ENCODE measurements at regions of chr13 and their contacts with region 1.

Region 1: GRCh38 chr13:106520205-106521054 is 15.0 kb downstream of the EFNB2 start:
- DNase-seq: no peak
- ATAC-seq: peak; percentile 42; the same call in 1 of the 2 replicates
- H3K4me3 ChIP-seq: no peak overlapping the region
- H3K27ac ChIP-seq: no peak overlapping the region
- H3K4me1 ChIP-seq: peaks cover 13 to 24% of the 10 kb centered on the region in 2 experiments
- H3K27me3 ChIP-seq: no peaks in the 10 kb centered on the region
- CTCF ChIP-seq: peak in 2 of 3 experiments; percentile 29 to 49; a peak in 3 of 6 replicates
- POLR2A ChIP-seq: no peak
- RAD21 ChIP-seq: peak; percentile 70

Region 2: DNA sequence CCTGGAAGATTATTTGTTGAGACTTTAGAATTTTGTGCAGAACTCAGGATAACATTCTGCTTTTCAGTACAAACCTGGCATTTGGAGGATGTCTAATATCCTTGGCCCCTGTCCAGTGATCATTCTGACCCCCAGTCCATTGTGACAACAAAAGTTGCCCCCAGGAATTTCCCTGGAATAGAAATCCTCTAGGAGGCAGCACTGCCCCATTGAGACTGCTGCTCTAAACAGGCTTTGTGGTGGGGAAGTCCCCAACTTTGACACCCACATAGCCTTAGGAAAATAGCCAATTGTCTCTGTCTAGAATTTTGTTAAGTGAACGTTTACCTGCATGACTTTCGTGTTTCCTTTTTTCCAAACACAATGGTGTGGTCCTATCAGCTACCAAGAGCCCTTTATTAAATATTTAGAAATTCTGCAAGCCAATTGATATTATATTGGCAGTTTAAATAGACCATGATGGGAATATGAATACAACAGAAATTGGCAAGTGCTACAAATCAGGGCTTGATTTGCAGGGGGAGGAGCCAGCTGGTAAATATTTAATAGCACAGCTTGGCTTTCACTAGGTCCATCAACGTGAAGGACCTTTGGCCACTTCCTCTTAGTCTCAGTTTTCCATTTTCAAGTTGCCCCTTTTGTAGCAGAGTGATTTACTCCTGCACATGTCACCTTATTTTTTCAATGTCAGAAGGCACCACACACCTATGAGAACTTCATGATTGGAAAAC is 436.6 kb before region 1 on chr13:
- CTCF ChIA-PET with region 1: no interaction called
- POLR2A ChIA-PET with region 1: no interaction called
- RAD21 ChIA-PET with region 1: no interaction called
- intact Hi-C with region 1: loop called (anchors 1 kb)
- DNase-seq: peak; percentile 46
- ATAC-seq: peak; percentile 78
- H3K4me3 ChIP-seq: no peak overlapping the region
- H3K27ac ChIP-seq: no peak overlapping the region
- H3K4me1 ChIP-seq: peaks cover 0 to 6% of the 10 kb centered on the region in 2 experiments; a peak in 1 of 4 replicates
- H3K27me3 ChIP-seq: no peaks in the 10 kb centered on the region
- CTCF ChIP-seq: peak; percentile 62 to 85 (median 77); a peak in 5 of 6 replicates
- POLR2A ChIP-seq: no peak
- RAD21 ChIP-seq: peak; percentile 89

Measured in HCT116 (cell line).